Naive thymus-derived CD4-positive, alpha-beta T cell (primary cell): ENCODE measurements at regions of chr7 and their contacts with region 1.

Region 1: DNA sequence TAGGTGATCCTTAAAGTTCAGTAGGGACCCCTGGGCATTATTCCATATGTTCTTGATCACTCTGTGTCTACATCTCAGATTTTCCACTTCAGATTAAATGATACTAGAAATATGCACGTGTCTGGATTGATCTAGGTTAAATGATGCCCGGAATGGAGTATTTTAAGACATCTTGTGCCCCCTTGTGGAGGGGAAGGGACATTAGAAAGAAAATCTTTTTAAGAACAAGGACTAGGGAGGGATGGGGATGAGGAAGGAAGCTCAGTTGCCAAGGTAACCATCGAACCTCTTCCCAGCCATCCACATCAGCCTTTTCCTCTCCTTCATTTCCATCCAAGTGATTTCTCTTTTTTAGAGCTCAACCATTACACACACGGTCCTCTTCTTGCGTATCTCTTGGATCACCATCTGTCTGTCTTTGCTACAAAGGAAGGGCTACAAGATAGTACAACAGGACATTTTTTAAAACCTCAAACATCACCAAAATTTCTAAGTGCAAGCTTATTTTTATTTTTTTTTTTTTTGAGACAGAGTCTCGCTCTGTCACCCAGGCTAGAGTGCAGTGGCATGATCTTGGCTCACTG is 40.5 kb downstream of the PRSS2 start:
- DNase-seq: peak in 7 of 9 donors; percentile 73 to 86 (median 79)
- ATAC-seq: peak; percentile 19
- H3K4me3 ChIP-seq: no peak overlapping the region
- H3K4me3 Mint-ChIP-seq: peak overlapping the region; percentile 58 to 100 (median 76)
- H3K27ac ChIP-seq: peak overlapping the region; percentile 98
- H3K27ac Mint-ChIP-seq: peak overlapping the region; percentile 92 to 100 (median 100)
- H3K4me1 ChIP-seq: peaks cover 47 to 89% of the 10 kb centered on the region in 2 donors
- H3K4me1 Mint-ChIP-seq: peaks cover 57 to 100% (median 91%) of the 10 kb centered on the region in 7 donors
- H3K27me3 ChIP-seq: no peaks in the 10 kb centered on the region
- H3K27me3 Mint-ChIP-seq: peaks cover 0 to 6% (median 0%) of the 10 kb centered on the region in 5 donors

Region 2: GRCh38 chr7:142338633-142339501 is 472.4 kb before region 1 on chr7:
- CTCF ChIA-PET with region 1: no interaction called
- POLR2A ChIA-PET with region 1: interaction called, 14 read pairs
- intact Hi-C with region 1: no loop called
- DNase-seq: no peak
- ATAC-seq: no peak
- H3K4me3 ChIP-seq: no peak overlapping the region
- H3K4me3 Mint-ChIP-seq: peak overlapping the region in 5 of 10 donors; percentile 13 to 52 (median 17)
- H3K27ac ChIP-seq: no peak overlapping the region
- H3K27ac Mint-ChIP-seq: peak overlapping the region in 4 of 9 donors; percentile 35 to 78 (median 57)
- H3K4me1 ChIP-seq: no peaks in the 10 kb centered on the region
- H3K4me1 Mint-ChIP-seq: peaks cover 1 to 24% (median 8%) of the 10 kb centered on the region in 7 donors
- H3K27me3 ChIP-seq: no peaks in the 10 kb centered on the region
- H3K27me3 Mint-ChIP-seq: peaks cover 0 to 21% (median 10%) of the 10 kb centered on the region in 5 donors

Region 3: GRCh38 chr7:142391191-142391992 is 419.9 kb before region 1 on chr7:
- CTCF ChIA-PET with region 1: interaction called, 4 read pairs
- POLR2A ChIA-PET with region 1: interaction called, 10 read pairs
- intact Hi-C with region 1: loop called (anchors 1 to 2 kb)
- DNase-seq: peak in 5 of 9 donors; percentile 22 to 37 (median 35)
- ATAC-seq: peak; percentile 63
- H3K4me3 ChIP-seq: no peak overlapping the region
- H3K4me3 Mint-ChIP-seq: peak overlapping the region; percentile 21 to 85 (median 54)
- H3K27ac ChIP-seq: peak overlapping the region; percentile 35
- H3K27ac Mint-ChIP-seq: peak overlapping the region in 8 of 9 donors; percentile 12 to 86 (median 58)
- H3K4me1 ChIP-seq: no peaks in the 10 kb centered on the region
- H3K4me1 Mint-ChIP-seq: peaks cover 0 to 6% (median 4%) of the 10 kb centered on the region in 7 donors
- H3K27me3 ChIP-seq: no peaks in the 10 kb centered on the region
- H3K27me3 Mint-ChIP-seq: peaks cover 0 to 6% (median 0%) of the 10 kb centered on the region in 5 donors

Region 4: GRCh38 chr7:142535123-142535779 is 276.0 kb before region 1 on chr7:
- CTCF ChIA-PET with region 1: interaction called, 10 read pairs
- POLR2A ChIA-PET with region 1: interaction called, 54 read pairs
- intact Hi-C with region 1: loop called (anchors 1 kb)
- DNase-seq: peak; percentile 40 to 78 (median 68)
- ATAC-seq: peak; percentile 93
- H3K4me3 ChIP-seq: peak overlapping the region; percentile 10
- H3K4me3 Mint-ChIP-seq: peak overlapping the region; percentile 54 to 87 (median 70)
- H3K27ac ChIP-seq: peak overlapping the region; percentile 47
- H3K27ac Mint-ChIP-seq: peak overlapping the region; percentile 61 to 91 (median 77)
- H3K4me1 ChIP-seq: peaks cover 3 to 31% of the 10 kb centered on the region in 2 donors
- H3K4me1 Mint-ChIP-seq: peaks cover 4 to 38% (median 31%) of the 10 kb centered on the region in 7 donors
- H3K27me3 ChIP-seq: no peaks in the 10 kb centered on the region
- H3K27me3 Mint-ChIP-seq: peaks cover 0 to 5% (median 0%) of the 10 kb centered on the region in 5 donors

Region 5: DNA sequence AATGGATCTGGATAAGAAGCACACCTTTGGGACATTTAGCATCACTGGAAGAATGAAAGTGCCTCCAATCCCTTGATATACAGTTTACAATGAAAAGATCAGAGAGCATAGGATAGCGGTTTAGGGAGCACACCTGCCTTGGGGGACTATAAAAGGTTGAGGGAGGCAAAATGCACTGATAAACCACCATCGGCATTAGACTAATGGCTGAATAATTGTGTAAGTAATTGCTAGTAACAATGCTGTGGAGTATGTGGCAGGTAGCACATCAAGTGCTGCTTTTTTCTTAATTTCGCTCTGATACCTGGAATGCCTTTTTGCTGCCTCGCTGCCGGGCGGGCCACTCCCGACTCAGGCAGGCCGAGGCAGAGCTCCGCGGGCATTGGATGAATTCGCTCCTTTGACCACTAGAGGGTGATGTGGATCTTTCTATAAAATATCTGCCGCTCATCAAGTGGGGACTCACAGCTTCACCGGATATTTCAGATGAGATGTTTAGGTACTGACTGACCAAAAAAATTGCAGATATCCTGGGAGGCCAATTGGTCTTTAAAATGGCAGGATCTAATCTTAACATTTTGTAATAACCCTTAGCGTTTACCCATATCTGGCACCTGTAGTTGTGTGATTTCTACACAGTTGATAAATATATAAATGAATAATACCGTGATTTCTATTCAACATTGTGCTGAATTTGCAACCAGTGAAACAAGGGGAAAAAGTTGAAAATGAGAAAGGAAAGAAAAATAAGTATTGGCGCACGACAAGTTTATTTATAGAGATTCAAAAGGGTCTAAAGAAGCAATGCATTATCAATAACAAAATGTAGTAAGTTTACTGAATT is 178.7 kb before region 1 on chr7:
- CTCF ChIA-PET with region 1: interaction called, 15 read pairs
- POLR2A ChIA-PET with region 1: interaction called, 68 read pairs
- intact Hi-C with region 1: loop called (anchors 1 kb)
- DNase-seq: peak; percentile 26 to 76 (median 63)
- ATAC-seq: peak; percentile 80
- H3K4me3 ChIP-seq: no peak overlapping the region
- H3K4me3 Mint-ChIP-seq: peak overlapping the region in 5 of 10 donors; percentile 6 to 63 (median 38)
- H3K27ac ChIP-seq: no peak overlapping the region
- H3K27ac Mint-ChIP-seq: peak overlapping the region in 7 of 9 donors; percentile 13 to 84 (median 46)
- H3K4me1 ChIP-seq: no peaks in the 10 kb centered on the region
- H3K4me1 Mint-ChIP-seq: peaks cover 4 to 17% (median 11%) of the 10 kb centered on the region in 7 donors
- H3K27me3 ChIP-seq: no peaks in the 10 kb centered on the region
- H3K27me3 Mint-ChIP-seq: peaks cover 0 to 15% (median 0%) of the 10 kb centered on the region in 5 donors

Region 6: GRCh38 chr7:142835487-142835886 is 24.2 kb after region 1 on chr7:
- CTCF ChIA-PET with region 1: interaction called, 45 read pairs
- POLR2A ChIA-PET with region 1: interaction called, 87 read pairs
- intact Hi-C with region 1: loop called in 1 of 2 experiments (anchors 1 kb)
- DNase-seq: peak in 5 of 9 donors; percentile 29 to 57 (median 42)
- ATAC-seq: no peak
- H3K4me3 ChIP-seq: no peak overlapping the region
- H3K4me3 Mint-ChIP-seq: peak overlapping the region in 5 of 10 donors; percentile 18 to 61 (median 45)
- H3K27ac ChIP-seq: no peak overlapping the region
- H3K27ac Mint-ChIP-seq: peak overlapping the region in 8 of 9 donors; percentile 15 to 88 (median 70)
- H3K4me1 ChIP-seq: no peaks in the 10 kb centered on the region
- H3K4me1 Mint-ChIP-seq: peaks cover 2 to 34% (median 16%) of the 10 kb centered on the region in 7 donors
- H3K27me3 ChIP-seq: no peaks in the 10 kb centered on the region
- H3K27me3 Mint-ChIP-seq: peaks cover 0 to 4% (median 0%) of the 10 kb centered on the region in 5 donors

Region 7: GRCh38 chr7:143408686-143409561 is 597.7 kb after region 1 on chr7 and contains the start of gene EPHA1:
- CTCF ChIA-PET with region 1: no interaction called
- POLR2A ChIA-PET with region 1: interaction called, 3 read pairs
- intact Hi-C with region 1: loop called in 1 of 2 experiments (anchors 5 kb)
- DNase-seq: peak in 7 of 9 donors; percentile 52 to 67 (median 62)
- ATAC-seq: peak; percentile 83
- H3K4me3 ChIP-seq: peak within 1 kb of the TSS; percentile 59
- H3K4me3 Mint-ChIP-seq: peak within 1 kb of the TSS; percentile 77 to 98 (median 94)
- H3K27ac ChIP-seq: peak within 1 kb of the TSS; percentile 69
- H3K27ac Mint-ChIP-seq: peak within 1 kb of the TSS; percentile 61 to 97 (median 94)
- H3K4me1 ChIP-seq: peaks cover 31 to 44% of the 10 kb centered on the region in 2 donors
- H3K4me1 Mint-ChIP-seq: peaks cover 23 to 88% (median 87%) of the 10 kb centered on the region in 7 donors
- H3K27me3 ChIP-seq: no peaks in the 10 kb centered on the region
- H3K27me3 Mint-ChIP-seq: peaks cover 0 to 14% (median 0%) of the 10 kb centered on the region in 5 donors
- total RNA-seq, gene EPHA1: 4.1 to 63.1 (median 33.6) TPM